AG04449 (cell line): ENCODE measurements at regions of chr22 and their contacts with region 1.

Region 1: GRCh38 chr22:30289134-30289979 is at the start of gene CASTOR1:
- DNase-seq: peak; percentile 83
- H3K4me3 ChIP-seq: peak within 1 kb of the TSS; percentile 81
- CTCF ChIP-seq: no peak

Region 2: GRCh38 chr22:30212363-30212995 is 76.9 kb before region 1 on chr22:
- CTCF ChIA-PET with region 1: no interaction called
- POLR2A ChIA-PET with region 1: no interaction called
- DNase-seq: peak; percentile 69
- H3K4me3 ChIP-seq: no peak overlapping the region
- CTCF ChIP-seq: peak; percentile 18

Region 3: GRCh38 chr22:30254314-30254713 is 35.0 kb before region 1 on chr22:
- CTCF ChIA-PET with region 1: interaction called, 19 read pairs
- POLR2A ChIA-PET with region 1: no interaction called
- DNase-seq: no peak
- H3K4me3 ChIP-seq: no peak overlapping the region
- CTCF ChIP-seq: no peak

Region 4: GRCh38 chr22:30305519-30305905 is 16.2 kb after region 1 on chr22:
- CTCF ChIA-PET with region 1: interaction called, 79 read pairs
- POLR2A ChIA-PET with region 1: interaction called, 3 read pairs
- DNase-seq: no peak
- H3K4me3 ChIP-seq: no peak overlapping the region
- CTCF ChIP-seq: no peak

Region 5: GRCh38 chr22:30332561-30332960 is 43.2 kb after region 1 on chr22:
- CTCF ChIA-PET with region 1: interaction called, 50 read pairs
- POLR2A ChIA-PET with region 1: interaction called, 3 read pairs
- DNase-seq: no peak
- H3K4me3 ChIP-seq: no peak overlapping the region
- CTCF ChIP-seq: no peak

Region 6: DNA sequence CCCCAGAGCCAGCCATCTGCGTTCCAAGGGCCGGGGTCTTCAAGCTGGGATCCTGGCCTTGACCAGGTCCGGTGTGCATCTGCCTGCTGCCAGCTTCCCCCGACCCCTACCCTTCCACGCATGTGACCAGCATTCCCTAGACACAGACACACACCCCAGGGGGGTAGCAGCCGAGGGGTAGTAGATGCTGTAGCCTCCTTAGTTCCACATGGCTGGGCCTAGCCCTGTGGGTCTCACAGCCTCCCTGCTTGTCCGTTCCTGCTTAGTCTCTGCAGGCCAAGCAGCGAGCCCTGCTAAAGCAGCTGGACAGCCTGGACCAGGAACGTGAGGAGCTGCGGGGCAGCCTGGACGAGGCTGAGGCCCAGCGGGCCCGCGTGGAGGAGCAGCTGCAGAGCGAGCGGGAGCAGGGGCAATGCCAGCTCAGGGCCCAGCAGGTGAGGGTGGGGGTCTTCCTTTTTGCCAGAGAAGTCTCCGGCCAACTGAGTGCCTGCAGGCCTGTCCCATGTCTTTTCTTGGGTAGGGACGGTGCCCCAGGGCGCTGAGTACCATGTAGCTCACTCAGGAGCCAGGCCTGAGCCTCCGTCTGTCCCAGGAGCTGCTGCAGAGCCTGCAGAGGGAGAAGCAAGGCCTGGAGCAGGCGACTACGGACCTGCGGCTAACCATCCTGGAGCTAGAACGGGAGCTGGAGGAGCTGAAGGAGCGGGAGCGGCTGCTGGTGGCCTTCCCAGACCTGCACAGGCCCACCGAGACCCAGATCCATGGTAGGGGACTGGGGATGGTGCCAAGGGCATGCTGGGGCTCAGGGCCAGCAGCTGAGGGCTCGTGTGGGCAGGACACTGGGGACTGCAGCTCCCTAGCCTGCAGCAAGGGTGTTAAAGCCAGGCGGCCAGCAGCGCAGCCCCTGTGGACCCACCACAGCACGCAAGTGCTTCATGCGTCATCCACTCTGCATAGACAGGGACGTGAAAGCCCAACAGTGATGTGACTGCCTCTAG is 84.3 kb after region 1 on chr22:
- CTCF ChIA-PET with region 1: interaction called, 22 read pairs
- POLR2A ChIA-PET with region 1: interaction called, 3 read pairs
- DNase-seq: no peak
- H3K4me3 ChIP-seq: no peak overlapping the region
- CTCF ChIP-seq: no peak

Region 7: GRCh38 chr22:30423982-30424963 is 134.9 kb after region 1 on chr22:
- CTCF ChIA-PET with region 1: interaction called, 21 read pairs
- POLR2A ChIA-PET with region 1: no interaction called
- DNase-seq: peak; percentile 98
- H3K4me3 ChIP-seq: peak overlapping the region; percentile 69
- CTCF ChIP-seq: no peak